H1 (cell line): ENCODE measurements at regions of chr14 and their contacts with region 1.

Region 1: GRCh38 chr14:23120541-23121251 is 1.6 kb upstream of the CEBPE start:
- DNase-seq: peak; percentile 70 to 89
- H3K4me3 ChIP-seq: no peak overlapping the region
- H3K27ac ChIP-seq: no peak overlapping the region
- H3K4me1 ChIP-seq: peaks cover 0 to 11% (median 3%) of the 10 kb centered on the region in 4 experiments; a peak in 5 of 7 replicates
- H3K27me3 ChIP-seq: no peaks in the 10 kb centered on the region
- CTCF ChIP-seq: peak; percentile 99 to 100 (median 100)
- EP300 ChIP-seq: peak in 1 of 2 experiments; percentile 22; a peak in 1 of 3 replicates
- POLR2A ChIP-seq: no peak
- RAD21 ChIP-seq: peak; percentile 100

Region 2: DNA sequence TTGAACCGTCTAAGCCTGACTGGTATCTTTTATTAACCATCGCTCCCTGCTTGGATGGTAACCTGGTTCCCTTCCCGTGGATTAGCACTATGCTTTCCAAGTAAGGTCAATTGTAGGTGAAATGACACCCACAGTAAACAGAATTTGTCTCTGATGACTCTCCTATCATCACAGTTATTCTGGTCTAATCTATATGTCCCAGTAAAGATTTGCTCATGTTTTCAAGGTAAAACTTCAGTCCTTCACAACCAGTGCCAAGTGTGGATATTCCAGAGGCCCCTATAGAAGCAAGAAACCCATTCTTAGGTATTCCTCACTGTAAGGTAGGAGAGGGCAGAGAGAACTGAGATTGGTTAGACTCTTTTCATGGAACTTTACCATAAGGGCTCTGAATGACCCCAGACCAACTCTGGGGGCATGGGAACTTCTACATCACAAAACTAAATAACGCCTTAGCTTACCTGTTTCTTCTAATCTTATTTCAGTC is 153.9 kb before region 1 on chr14:
- CTCF ChIA-PET with region 1: no interaction called
- POLR2A ChIA-PET with region 1: no interaction called
- DNase-seq: no peak
- H3K4me3 ChIP-seq: no peak overlapping the region
- H3K27ac ChIP-seq: no peak overlapping the region
- H3K4me1 ChIP-seq: no peaks in the 10 kb centered on the region
- H3K27me3 ChIP-seq: no peaks in the 10 kb centered on the region
- CTCF ChIP-seq: no peak
- EP300 ChIP-seq: no peak
- POLR2A ChIP-seq: no peak; a peak in 1 of 3 replicates
- RAD21 ChIP-seq: no peak

Region 3: DNA sequence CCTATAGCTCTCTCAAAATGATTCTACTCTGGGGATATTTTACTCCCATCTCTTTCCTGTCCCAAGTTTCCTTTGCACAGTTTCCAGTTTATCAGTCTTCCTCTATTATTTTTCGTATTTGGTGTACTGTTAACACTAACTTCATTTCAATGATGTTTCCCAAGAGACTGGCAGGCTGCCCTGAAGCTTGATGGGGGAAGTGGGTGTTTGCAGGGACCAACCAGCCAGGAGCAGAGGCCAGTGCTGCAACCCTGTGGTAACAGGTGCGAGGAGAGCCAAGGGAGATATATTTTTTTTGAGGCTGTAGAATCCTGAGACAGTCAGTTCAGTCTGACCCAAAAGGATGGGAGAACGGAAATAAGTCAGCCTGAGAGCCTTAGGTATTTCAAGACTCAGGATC is 10.2 kb after region 1 on chr14:
- CTCF ChIA-PET with region 1: interaction called, 27 read pairs
- POLR2A ChIA-PET with region 1: interaction called, 3 read pairs
- DNase-seq: no peak
- H3K4me3 ChIP-seq: no peak overlapping the region
- H3K27ac ChIP-seq: no peak overlapping the region
- H3K4me1 ChIP-seq: 0 out of 7 replicates have a peak, but pooled peaks cover 0 to under 1% (median 0%) of the 10 kb centered on the region in 4 experiments
- H3K27me3 ChIP-seq: no peaks in the 10 kb centered on the region
- CTCF ChIP-seq: no peak
- EP300 ChIP-seq: no peak
- POLR2A ChIP-seq: no peak
- RAD21 ChIP-seq: no peak

Region 4: GRCh38 chr14:23160924-23161538 is 40.3 kb after region 1 on chr14:
- CTCF ChIA-PET with region 1: interaction called, 42 read pairs
- POLR2A ChIA-PET with region 1: no interaction called
- DNase-seq: peak in 1 of 2 experiments; percentile 83
- H3K4me3 ChIP-seq: peak overlapping the region in 1 of 4 experiments; percentile 47; a peak in 2 of 8 replicates
- H3K27ac ChIP-seq: peak overlapping the region; percentile 79; the same call in 1 of the 2 replicates
- H3K4me1 ChIP-seq: peaks cover 9 to 31% (median 17%) of the 10 kb centered on the region in 4 experiments
- H3K27me3 ChIP-seq: no peaks in the 10 kb centered on the region
- CTCF ChIP-seq: no peak
- EP300 ChIP-seq: no peak
- POLR2A ChIP-seq: peak; percentile 43 to 54
- RAD21 ChIP-seq: no peak; a peak in 2 of 4 replicates

Region 5: GRCh38 chr14:23259426-23259825 is 138.7 kb after region 1 on chr14:
- CTCF ChIA-PET with region 1: interaction called, 11 read pairs
- POLR2A ChIA-PET with region 1: no interaction called
- DNase-seq: no peak
- H3K4me3 ChIP-seq: no peak overlapping the region
- H3K27ac ChIP-seq: no peak overlapping the region
- H3K4me1 ChIP-seq: peaks cover 0 to 6% (median 0%) of the 10 kb centered on the region in 4 experiments; a peak in 1 of 7 replicates
- H3K27me3 ChIP-seq: no peaks in the 10 kb centered on the region
- CTCF ChIP-seq: no peak
- EP300 ChIP-seq: no peak
- POLR2A ChIP-seq: no peak
- RAD21 ChIP-seq: no peak

Region 6: DNA sequence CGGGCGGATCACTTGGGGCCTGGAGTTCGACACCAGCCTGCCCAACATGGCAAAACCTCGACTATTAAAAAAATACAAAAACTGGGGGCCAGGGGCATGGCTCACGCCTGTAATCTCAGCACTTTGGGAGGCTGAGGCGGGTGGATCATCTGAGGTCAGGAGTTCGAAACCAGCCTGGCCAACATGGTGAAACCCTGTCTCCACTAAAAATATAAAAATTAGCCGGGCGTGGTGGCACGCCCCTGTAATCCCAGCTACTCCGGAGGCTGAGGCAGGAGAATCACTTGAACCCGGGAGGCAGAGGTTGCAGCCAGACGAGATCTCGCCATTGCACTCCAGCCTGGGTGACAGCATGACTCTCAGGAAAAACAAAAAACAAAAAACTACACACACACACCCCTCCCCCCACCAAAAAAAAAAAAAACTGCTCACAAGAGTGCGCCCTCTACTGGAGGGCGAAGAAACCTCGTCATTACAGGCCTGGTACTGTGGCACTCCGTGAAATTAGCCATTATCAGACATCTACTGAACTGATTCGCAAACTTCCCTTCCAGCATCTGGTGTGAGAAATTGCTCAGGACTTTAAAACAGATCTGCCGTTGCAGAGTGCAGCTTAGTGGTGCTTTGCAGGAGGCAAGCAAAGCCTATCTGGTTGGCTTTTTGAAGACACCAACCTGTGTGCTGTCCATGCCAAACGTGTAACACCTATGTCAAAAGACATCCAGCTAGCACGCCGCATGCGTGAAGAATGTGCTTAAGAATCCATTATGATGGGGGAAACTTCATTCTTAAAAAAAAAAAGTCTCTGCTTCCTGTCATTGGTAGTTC is 174.3 kb after region 1 on chr14:
- CTCF ChIA-PET with region 1: interaction called, 15 read pairs
- POLR2A ChIA-PET with region 1: no interaction called
- DNase-seq: peak in 1 of 2 experiments; percentile 56
- H3K4me3 ChIP-seq: no peak overlapping the region
- H3K27ac ChIP-seq: no peak overlapping the region
- H3K4me1 ChIP-seq: no peaks in the 10 kb centered on the region; a peak in 3 of 7 replicates
- H3K27me3 ChIP-seq: peaks cover 42 to 80% (median 73%) of the 10 kb centered on the region in 4 experiments
- CTCF ChIP-seq: peak; percentile 64 to 80 (median 66)
- EP300 ChIP-seq: 0 out of 3 replicates have a peak, but pooled peaks of 1 of the 2 experiments have one; percentile 12
- POLR2A ChIP-seq: no peak
- RAD21 ChIP-seq: peak; percentile 32 to 55; a peak in 2 of 4 replicates